ENCODE measurements at regions of chr15 and their contacts with region 1.

Region 1: GRCh38 chr15:68550481-68551295 is 28.1 kb upstream of the CORO2B start:
- DNase-seq: peak; percentile 66 to 71
- ATAC-seq: peak; percentile 41 to 68; a peak in 4 of 6 replicates
- H3K4me3 ChIP-seq: no peak overlapping the region
- H3K27ac ChIP-seq: peak overlapping the region; percentile 51 to 64; a peak in 5 of 6 replicates
- H3K4me1 ChIP-seq: peaks cover 26% of the 10 kb centered on the region
- CTCF ChIP-seq: peak; percentile 97
- EP300 ChIP-seq: no peak
- POLR2A ChIP-seq: no peak
- RAD21 ChIP-seq: peak; percentile 79 to 85

Region 2: GRCh38 chr15:68252925-68253534 is 297.7 kb before region 1 on chr15:
- CTCF ChIA-PET with region 1: interaction called, 14 read pairs
- POLR2A ChIA-PET with region 1: no interaction called
- DNase-seq: peak; percentile 82 to 88
- ATAC-seq: peak; percentile 69 to 74
- H3K4me3 ChIP-seq: no peak overlapping the region
- H3K27ac ChIP-seq: no peak overlapping the region
- H3K4me1 ChIP-seq: peaks cover 12% of the 10 kb centered on the region; the same call in 2 of the 3 replicates
- CTCF ChIP-seq: peak; percentile 96
- EP300 ChIP-seq: no peak
- POLR2A ChIP-seq: no peak
- RAD21 ChIP-seq: peak; percentile 95 to 97

Region 3: DNA sequence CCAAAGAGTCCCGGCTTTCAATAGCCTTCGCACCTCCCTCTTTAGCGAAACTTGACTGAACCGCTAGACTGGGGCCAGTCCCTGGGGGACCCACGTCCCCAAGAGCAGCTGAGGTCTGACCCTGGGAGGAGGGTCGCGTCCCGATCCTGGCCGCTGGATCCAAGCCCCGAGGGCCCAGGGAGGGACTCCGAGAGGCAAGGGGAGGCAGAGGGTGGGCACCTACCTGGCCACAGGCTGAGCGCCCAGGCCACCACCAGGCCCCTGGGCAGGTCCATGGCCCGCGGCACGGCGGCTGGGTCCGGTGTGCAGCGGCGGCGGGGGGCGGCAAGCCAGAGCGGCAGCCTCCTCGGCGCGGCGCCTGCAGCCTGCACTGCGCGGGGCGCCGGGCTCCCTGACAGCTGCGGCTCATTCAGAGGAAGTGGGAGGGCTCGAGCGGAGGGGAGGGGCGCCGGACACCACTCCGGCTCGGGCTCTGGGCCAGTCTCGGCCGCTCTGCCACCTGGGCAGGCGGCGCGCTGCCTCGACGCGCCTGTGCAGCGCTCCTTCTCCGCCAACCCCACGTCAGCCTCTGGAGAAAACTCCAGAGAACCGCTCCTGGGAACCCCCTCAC is 118.8 kb before region 1 on chr15 and contains the start of gene ITGA11:
- CTCF ChIA-PET with region 1: interaction called, 11 read pairs
- POLR2A ChIA-PET with region 1: no interaction called
- DNase-seq: peak; percentile 57 to 66
- ATAC-seq: peak; percentile 88 to 92
- H3K4me3 ChIP-seq: peak within 1 kb of the TSS; percentile 58
- H3K27ac ChIP-seq: peak within 1 kb of the TSS; percentile 63 to 86
- H3K4me1 ChIP-seq: peaks cover 25% of the 10 kb centered on the region
- CTCF ChIP-seq: no peak
- EP300 ChIP-seq: no peak
- POLR2A ChIP-seq: peak; percentile 48; the same call in 1 of the 2 replicates
- RAD21 ChIP-seq: 0 out of 5 replicates have a peak, but pooled peaks of 1 of the 2 experiments have one; percentile 40
- polyA plus RNA-seq, gene ITGA11: 8.3 and 13.2 TPM in 2 replicates

Region 4: GRCh38 chr15:68518785-68519430 is 31.8 kb before region 1 on chr15:
- CTCF ChIA-PET with region 1: interaction called, 37 read pairs
- POLR2A ChIA-PET with region 1: no interaction called
- DNase-seq: no peak
- ATAC-seq: 0 out of 6 replicates have a peak, but pooled peaks of 1 of the 2 experiments have one; percentile 15
- H3K4me3 ChIP-seq: no peak overlapping the region
- H3K27ac ChIP-seq: peak overlapping the region in 1 of 2 experiments; percentile 35; a peak in 1 of 6 replicates
- H3K4me1 ChIP-seq: no peaks in the 10 kb centered on the region
- CTCF ChIP-seq: no peak
- EP300 ChIP-seq: no peak
- POLR2A ChIP-seq: no peak
- RAD21 ChIP-seq: no peak

Region 5: GRCh38 chr15:68586274-68586961 is 35.7 kb after region 1 on chr15:
- CTCF ChIA-PET with region 1: interaction called, 16 read pairs
- POLR2A ChIA-PET with region 1: no interaction called
- DNase-seq: peak; percentile 68 to 80
- ATAC-seq: peak; percentile 78 to 87
- H3K4me3 ChIP-seq: no peak overlapping the region
- H3K27ac ChIP-seq: peak overlapping the region; percentile 38 to 72; a peak in 5 of 6 replicates
- H3K4me1 ChIP-seq: peaks cover 14% of the 10 kb centered on the region
- CTCF ChIP-seq: no peak
- EP300 ChIP-seq: no peak
- POLR2A ChIP-seq: no peak
- RAD21 ChIP-seq: no peak

Region 6: GRCh38 chr15:68650901-68651709 is 100.4 kb after region 1 on chr15:
- CTCF ChIA-PET with region 1: interaction called, 110 read pairs
- POLR2A ChIA-PET with region 1: no interaction called
- DNase-seq: peak; percentile 78 to 90
- ATAC-seq: peak; percentile 93 to 99
- H3K4me3 ChIP-seq: no peak overlapping the region
- H3K27ac ChIP-seq: peak overlapping the region in 1 of 2 experiments; percentile 30; a peak in 2 of 6 replicates
- H3K4me1 ChIP-seq: no peaks in the 10 kb centered on the region
- CTCF ChIP-seq: peak; percentile 86
- EP300 ChIP-seq: no peak
- POLR2A ChIP-seq: no peak
- RAD21 ChIP-seq: peak; percentile 79